GM12878 (cell line): ENCODE measurements at regions of chr19 and their contacts with region 1.

Region 1: DNA sequence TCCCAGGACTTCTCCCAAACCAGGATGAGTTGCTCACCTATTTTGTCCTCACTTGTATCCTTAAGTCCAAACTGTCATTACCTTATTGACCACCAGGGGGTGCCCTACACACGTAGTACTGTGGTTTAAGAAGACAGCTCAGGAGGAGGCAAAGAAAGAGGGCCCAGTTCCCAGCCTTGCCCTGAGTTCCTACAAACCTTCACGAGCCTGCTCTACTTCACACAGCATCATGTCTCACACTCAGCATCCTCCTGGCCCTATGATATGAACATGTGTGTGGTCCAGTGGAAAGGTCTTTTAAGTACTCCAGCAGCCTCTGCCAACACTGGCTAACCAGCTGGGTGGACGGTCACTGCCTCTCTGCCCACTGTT is 8.1 kb upstream of the ZNF784 start:
- DNase-seq: peak; percentile 75
- ATAC-seq: peak; percentile 75
- H3K4me3 ChIP-seq: no peak overlapping the region
- H3K27ac ChIP-seq: no peak overlapping the region
- H3K4me1 ChIP-seq: peaks cover 19% of the 10 kb centered on the region
- H3K27me3 ChIP-seq: no peaks in the 10 kb centered on the region
- CTCF ChIP-seq: peak; percentile 75 to 85 (median 76)
- EP300 ChIP-seq: no peak
- POLR2A ChIP-seq: no peak
- RAD21 ChIP-seq: peak; percentile 91

Region 2: DNA sequence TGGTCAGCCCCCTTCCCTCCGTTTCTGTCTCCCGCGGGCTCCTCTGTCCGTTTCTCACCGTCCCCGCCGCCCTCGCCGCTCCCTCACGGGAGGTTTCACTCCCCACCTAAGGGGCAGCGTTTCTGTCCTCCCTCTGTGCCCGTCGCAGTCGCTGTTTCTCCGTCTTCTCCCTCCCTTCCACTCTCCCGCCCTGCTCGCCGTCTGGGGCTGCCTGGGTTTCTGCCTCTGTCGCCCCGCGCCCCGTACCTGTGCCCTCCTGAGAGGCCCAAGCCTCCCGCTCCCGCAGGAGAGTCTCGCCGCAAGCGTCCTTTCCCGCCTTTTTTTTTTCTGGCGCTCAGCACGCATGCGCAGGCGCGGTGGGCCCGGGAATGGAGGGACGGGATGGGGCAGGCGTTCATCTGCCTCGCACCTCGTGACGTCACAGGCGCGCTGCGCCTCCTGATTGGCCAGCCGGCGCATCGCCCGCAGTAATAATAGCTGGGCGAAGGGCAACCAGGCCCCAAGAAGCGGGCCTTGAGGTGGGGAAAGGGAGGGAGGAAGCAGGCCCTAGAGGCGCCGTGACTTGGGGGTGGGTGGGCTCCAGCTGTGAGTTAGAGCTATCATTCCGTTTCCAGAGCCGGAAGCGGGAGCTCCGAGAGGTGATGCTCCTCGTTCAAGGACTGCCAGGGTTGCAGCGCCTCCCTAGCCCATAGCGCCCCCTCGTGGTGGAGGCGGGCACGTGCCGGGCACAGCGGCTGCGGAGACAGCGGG is 128.8 kb before region 1 on chr19:
- CTCF ChIA-PET with region 1: interaction called, 30 read pairs
- POLR2A ChIA-PET with region 1: no interaction called
- RAD21 ChIA-PET with region 1: interaction called, 13 read pairs
- SMC1A ChIA-PET with region 1: interaction called, 5 read pairs
- in situ Hi-C with region 1: no loop called
- intact Hi-C with region 1: no loop called
- DNase-seq: peak; percentile 80
- ATAC-seq: peak; percentile 99
- H3K4me3 ChIP-seq: peak overlapping the region; percentile 43; the same call in 1 of the 2 replicates
- H3K27ac ChIP-seq: peak overlapping the region; percentile 80
- H3K4me1 ChIP-seq: peaks cover 5% of the 10 kb centered on the region
- H3K27me3 ChIP-seq: no peaks in the 10 kb centered on the region
- CTCF ChIP-seq: peak; percentile 94 to 99 (median 95)
- EP300 ChIP-seq: no peak
- POLR2A ChIP-seq: peak; percentile 50; the same call in 1 of the 2 replicates
- RAD21 ChIP-seq: peak; percentile 90

Region 3: GRCh38 chr19:55605207-55605636 is 27.2 kb before region 1 on chr19:
- CTCF ChIA-PET with region 1: interaction called, 76 read pairs
- POLR2A ChIA-PET with region 1: interaction called, 13 read pairs
- RAD21 ChIA-PET with region 1: interaction called, 21 read pairs
- SMC1A ChIA-PET with region 1: interaction called, 16 read pairs
- in situ Hi-C with region 1: no loop called
- intact Hi-C with region 1: no loop called
- DNase-seq: peak; percentile 94
- ATAC-seq: peak; percentile 86
- H3K4me3 ChIP-seq: peak overlapping the region; percentile 69; the same call in 1 of the 2 replicates
- H3K27ac ChIP-seq: peak overlapping the region; percentile 90
- H3K4me1 ChIP-seq: peaks cover 10% of the 10 kb centered on the region; the same call in 1 of the 2 replicates
- H3K27me3 ChIP-seq: no peaks in the 10 kb centered on the region
- CTCF ChIP-seq: no peak
- EP300 ChIP-seq: no peak
- POLR2A ChIP-seq: no peak
- RAD21 ChIP-seq: no peak

Region 4: GRCh38 chr19:55674841-55675660 is 42.6 kb after region 1 on chr19 and contains the start of gene EPN1:
- CTCF ChIA-PET with region 1: interaction called, 33 read pairs
- POLR2A ChIA-PET with region 1: no interaction called
- RAD21 ChIA-PET with region 1: interaction called, 11 read pairs
- SMC1A ChIA-PET with region 1: interaction called, 6 read pairs
- in situ Hi-C with region 1: no loop called
- intact Hi-C with region 1: no loop called
- DNase-seq: peak; percentile 74
- ATAC-seq: peak; percentile 64
- H3K4me3 ChIP-seq: peak within 1 kb of the TSS; percentile 92
- H3K27ac ChIP-seq: peak within 1 kb of the TSS; percentile 94
- H3K4me1 ChIP-seq: peaks cover 23% of the 10 kb centered on the region
- H3K27me3 ChIP-seq: no peaks in the 10 kb centered on the region
- CTCF ChIP-seq: no peak
- EP300 ChIP-seq: no peak
- POLR2A ChIP-seq: peak; percentile 72
- RAD21 ChIP-seq: no peak
- polyA plus RNA-seq, gene EPN1: 0.11 to 0.16 TPM

Region 5: GRCh38 chr19:56080669-56081401 is 448.4 kb after region 1 on chr19:
- CTCF ChIA-PET with region 1: interaction called, 4 read pairs
- POLR2A ChIA-PET with region 1: no interaction called
- RAD21 ChIA-PET with region 1: no interaction called
- SMC1A ChIA-PET with region 1: no interaction called
- in situ Hi-C with region 1: no loop called
- intact Hi-C with region 1: loop called (anchors 10 kb)
- DNase-seq: peak; percentile 38
- ATAC-seq: peak; percentile 89
- H3K4me3 ChIP-seq: peak overlapping the region; percentile 61; the same call in 1 of the 2 replicates
- H3K27ac ChIP-seq: peak overlapping the region; percentile 3; the same call in 1 of the 2 replicates
- H3K4me1 ChIP-seq: peaks cover 5% of the 10 kb centered on the region; the same call in 1 of the 2 replicates
- H3K27me3 ChIP-seq: no peaks in the 10 kb centered on the region
- CTCF ChIP-seq: peak; percentile 64 to 69 (median 64)
- EP300 ChIP-seq: peak; percentile 57 to 58; a peak in 1 of 4 replicates
- POLR2A ChIP-seq: peak; percentile 62; the same call in 1 of the 2 replicates
- RAD21 ChIP-seq: peak; percentile 60